ENCODE measurements at regions of chr5 and their contacts with region 1.

Region 1: DNA sequence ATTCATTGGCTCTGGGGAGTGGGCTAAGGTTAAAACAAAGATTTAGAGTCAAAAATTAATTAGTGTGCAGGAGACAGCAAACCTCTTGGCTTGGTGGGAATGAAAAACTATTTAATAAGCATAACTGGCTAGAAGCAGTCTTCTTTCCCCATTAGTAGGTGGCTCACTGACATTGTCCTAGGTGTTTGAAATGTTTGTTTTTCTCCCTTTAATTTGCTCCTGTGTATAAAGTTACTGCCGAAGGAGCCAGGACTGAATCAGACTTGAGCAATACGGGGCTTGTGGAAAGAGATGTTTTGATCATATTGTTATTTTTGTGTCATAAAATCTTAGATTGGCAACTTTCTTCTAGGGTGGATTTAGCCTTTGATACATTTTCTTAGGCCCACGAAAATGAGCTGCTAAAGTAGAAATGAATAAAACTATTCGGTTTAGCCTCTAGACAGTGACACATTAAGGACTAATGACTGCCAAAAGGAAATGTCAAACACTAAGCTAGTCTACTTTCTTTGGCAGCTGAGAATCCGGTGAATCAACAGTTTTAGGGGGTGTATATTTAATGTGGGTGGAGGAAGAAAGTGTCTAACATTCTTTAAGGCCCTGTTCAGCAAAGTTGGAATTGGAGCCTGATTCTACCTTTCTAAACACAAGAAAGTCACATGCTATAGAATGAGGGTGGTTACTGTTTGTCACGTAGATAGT is 30.2 kb downstream of the LRRTM2 start:
- DNase-seq: peak; percentile 88
- ATAC-seq: peak; percentile 82
- H3K4me3 ChIP-seq: no peak overlapping the region
- H3K27ac ChIP-seq: no peak overlapping the region
- H3K4me1 ChIP-seq: peaks cover 19% of the 10 kb centered on the region
- H3K27me3 ChIP-seq: no peaks in the 10 kb centered on the region
- CTCF ChIP-seq: no peak
- POLR2A ChIP-seq: no peak
- RAD21 ChIP-seq: no peak

Region 2: DNA sequence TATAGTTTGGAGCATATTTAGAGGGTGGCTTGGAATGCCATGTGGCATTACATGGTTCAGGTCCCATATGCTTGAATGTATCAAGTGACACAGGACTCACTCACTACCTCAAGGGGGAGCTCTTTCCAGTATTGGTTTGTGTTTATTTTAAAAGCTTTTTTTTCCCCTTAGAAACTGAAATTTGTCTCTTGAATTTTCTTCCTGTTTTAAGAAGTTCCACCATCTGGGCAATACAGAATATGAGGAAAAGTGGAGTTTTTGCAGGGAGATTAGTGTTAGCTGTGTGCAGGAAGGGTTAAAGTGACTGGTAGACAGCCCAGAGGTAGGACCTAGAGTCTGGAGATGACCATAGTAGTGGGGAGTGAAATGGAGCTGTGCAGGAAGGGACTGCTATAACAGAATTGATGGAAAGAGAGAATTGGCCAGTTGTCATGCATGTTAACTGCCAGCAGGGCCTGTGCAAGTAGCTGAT is 55.2 kb before region 1 on chr5:
- CTCF ChIA-PET with region 1: interaction called, 5 read pairs
- POLR2A ChIA-PET with region 1: no interaction called
- dilution Hi-C with region 1: no loop called
- in situ Hi-C with region 1: no loop called
- intact Hi-C with region 1: loop called (anchors 5 kb)
- DNase-seq: peak; percentile 38
- ATAC-seq: peak; percentile 42; the same call in 1 of the 2 replicates
- H3K4me3 ChIP-seq: no peak overlapping the region
- H3K27ac ChIP-seq: no peak overlapping the region
- H3K4me1 ChIP-seq: peaks cover 14% of the 10 kb centered on the region
- H3K27me3 ChIP-seq: no peaks in the 10 kb centered on the region
- CTCF ChIP-seq: peak; percentile 51
- POLR2A ChIP-seq: no peak
- RAD21 ChIP-seq: peak; percentile 26; the same call in 1 of the 2 replicates

Region 3: DNA sequence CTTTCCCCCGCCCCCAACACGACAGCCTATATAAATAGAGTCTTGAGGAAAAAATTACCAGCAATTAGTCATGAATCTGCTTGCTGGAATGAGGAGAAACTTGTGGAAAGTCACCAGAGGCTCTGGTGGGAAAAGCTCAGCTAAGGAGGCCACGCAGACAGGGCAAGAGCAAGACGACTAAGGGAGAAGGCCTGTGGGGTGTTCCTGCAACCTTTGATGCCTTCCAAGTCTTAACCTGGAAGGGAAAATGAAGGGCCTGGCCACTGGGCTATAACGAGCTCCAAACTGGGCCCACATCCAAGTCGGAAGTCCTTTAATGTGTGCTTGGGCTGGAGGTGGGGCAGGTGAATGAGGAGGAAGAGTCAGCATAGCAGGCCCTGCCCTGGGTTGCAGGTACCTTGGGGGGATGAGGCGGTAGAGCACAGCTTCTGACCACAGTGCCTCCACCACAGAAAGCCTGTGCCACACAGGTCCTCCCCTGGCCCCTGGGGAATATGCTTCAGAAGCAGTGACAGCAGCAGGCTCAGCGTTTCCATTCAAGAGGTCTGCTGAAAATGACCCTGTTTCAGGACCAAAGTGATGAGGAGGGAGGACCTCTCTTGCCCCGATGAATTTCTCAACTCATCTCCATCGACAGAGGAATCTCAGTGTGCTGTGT is 123.0 kb after region 1 on chr5:
- CTCF ChIA-PET with region 1: no interaction called
- POLR2A ChIA-PET with region 1: no interaction called
- dilution Hi-C with region 1: no loop called
- in situ Hi-C with region 1: no loop called
- intact Hi-C with region 1: no loop called
- DNase-seq: peak; percentile 36
- ATAC-seq: peak; percentile 42; the same call in 1 of the 2 replicates
- H3K4me3 ChIP-seq: no peak overlapping the region
- H3K27ac ChIP-seq: no peak overlapping the region
- H3K4me1 ChIP-seq: peaks cover 16% of the 10 kb centered on the region
- H3K27me3 ChIP-seq: no peaks in the 10 kb centered on the region
- CTCF ChIP-seq: no peak
- POLR2A ChIP-seq: no peak
- RAD21 ChIP-seq: no peak